Activated T-helper 2 cell treated with anti-CD3 and anti-CD28 coated beads, Interferon-gamma antibody, Interleukin-2, Interleukin-4, amounts not matched to agents 10 μg/mL and 5 μg/mL and 100 μg/mL, durations not matched to agents 14 hours and 24 hours and 36 hours (primary cell): ENCODE measurements at regions of chr21 and their contacts with region 1.

Region 1: GRCh38 chr21:35342440-35342839 is 293.3 kb upstream of the RUNX1 start:
- DNase-seq: no peak
- H3K4me3 Mint-ChIP-seq: peak overlapping the region; percentile 69
- H3K27ac Mint-ChIP-seq: peak overlapping the region; percentile 98
- H3K4me1 Mint-ChIP-seq: peaks cover 63% of the 10 kb centered on the region
- H3K27me3 Mint-ChIP-seq: no peaks in the 10 kb centered on the region

Region 2: GRCh38 chr21:35088319-35088771 is 254.1 kb before region 1 on chr21:
- intact Hi-C with region 1: loop called (anchors 2 kb)
- DNase-seq: no peak
- H3K4me3 Mint-ChIP-seq: no peak overlapping the region
- H3K27ac Mint-ChIP-seq: peak overlapping the region; percentile 85
- H3K4me1 Mint-ChIP-seq: peaks cover 52% of the 10 kb centered on the region
- H3K27me3 Mint-ChIP-seq: no peaks in the 10 kb centered on the region

Region 3: DNA sequence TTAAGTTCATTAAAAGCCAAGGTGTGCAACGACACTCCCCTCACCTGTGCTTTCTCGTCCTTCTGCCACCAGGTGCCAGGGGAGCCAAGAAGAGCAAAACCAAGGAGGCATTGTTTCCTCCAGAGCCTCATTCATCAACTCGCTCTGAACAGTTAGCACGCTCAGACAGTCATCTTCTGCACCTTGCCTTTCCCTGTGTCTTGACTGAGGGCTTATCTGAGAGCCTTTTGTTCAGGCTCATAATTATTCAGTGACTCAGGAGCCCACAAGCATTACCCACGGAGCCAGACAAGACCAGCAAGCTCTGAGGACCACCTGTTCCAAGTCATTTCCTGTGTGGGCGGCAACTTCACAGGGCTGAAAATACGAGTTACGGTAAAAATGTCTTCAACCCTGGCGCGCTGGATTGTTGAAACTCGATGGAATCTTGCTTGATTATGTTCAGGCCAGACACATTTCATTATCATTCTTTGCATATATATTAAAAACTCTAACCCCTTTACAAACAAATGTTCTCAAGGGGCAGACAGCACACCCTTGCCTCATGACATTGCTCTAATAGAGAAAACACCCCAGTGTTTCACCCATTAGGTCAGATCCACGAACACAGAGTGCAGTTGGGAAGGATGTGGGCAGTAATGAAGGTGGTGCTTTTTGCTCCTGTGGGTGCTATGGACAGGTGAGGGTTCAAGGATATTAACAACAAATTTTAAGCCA is 203.6 kb before region 1 on chr21:
- intact Hi-C with region 1: loop called (anchors 1 kb)
- DNase-seq: peak; percentile 10
- H3K4me3 Mint-ChIP-seq: peak overlapping the region; percentile 62
- H3K27ac Mint-ChIP-seq: peak overlapping the region; percentile 94
- H3K4me1 Mint-ChIP-seq: peaks cover 33% of the 10 kb centered on the region
- H3K27me3 Mint-ChIP-seq: no peaks in the 10 kb centered on the region

Region 4: DNA sequence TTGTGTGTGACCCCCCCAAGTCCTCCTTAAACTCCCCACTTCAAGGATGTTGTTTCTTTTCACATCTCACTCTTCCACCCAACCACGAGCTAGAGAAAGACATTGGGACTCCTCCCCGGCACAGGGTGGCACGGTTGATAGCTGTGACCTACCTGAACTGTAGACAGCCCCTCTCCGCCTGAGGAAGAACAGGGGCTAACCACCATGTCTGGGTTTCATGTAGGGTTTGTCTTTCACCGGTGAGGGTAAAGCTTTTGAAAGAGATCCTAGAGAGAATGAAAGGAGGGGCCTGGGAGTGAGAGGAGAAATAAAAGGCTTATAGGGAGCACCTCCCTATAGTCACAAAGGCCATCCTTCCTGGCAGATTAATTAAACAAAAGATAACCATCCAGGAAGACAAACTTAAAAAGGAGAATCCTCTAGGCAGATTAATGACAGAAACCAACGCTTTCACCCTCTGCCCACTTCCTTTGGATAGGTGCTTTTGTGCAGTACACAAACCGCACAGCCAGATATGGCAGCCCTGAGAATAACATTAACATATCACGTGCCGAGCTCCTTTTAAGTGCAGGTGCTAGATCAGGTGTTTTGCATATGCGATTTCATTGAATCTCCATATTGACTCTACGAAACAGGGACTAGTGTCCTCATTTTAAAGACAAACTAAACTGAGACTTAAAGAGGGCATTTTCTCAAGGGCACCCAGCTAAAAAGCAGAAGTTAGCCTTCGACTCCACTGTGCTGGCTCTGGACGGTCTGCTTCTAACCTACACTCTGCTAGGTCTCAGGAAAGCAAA is 115.3 kb before region 1 on chr21:
- intact Hi-C with region 1: loop called (anchors 1 kb)
- DNase-seq: peak; percentile 52
- H3K4me3 Mint-ChIP-seq: peak overlapping the region; percentile 37
- H3K27ac Mint-ChIP-seq: peak overlapping the region; percentile 72
- H3K4me1 Mint-ChIP-seq: peaks cover 52% of the 10 kb centered on the region
- H3K27me3 Mint-ChIP-seq: no peaks in the 10 kb centered on the region

Region 5: DNA sequence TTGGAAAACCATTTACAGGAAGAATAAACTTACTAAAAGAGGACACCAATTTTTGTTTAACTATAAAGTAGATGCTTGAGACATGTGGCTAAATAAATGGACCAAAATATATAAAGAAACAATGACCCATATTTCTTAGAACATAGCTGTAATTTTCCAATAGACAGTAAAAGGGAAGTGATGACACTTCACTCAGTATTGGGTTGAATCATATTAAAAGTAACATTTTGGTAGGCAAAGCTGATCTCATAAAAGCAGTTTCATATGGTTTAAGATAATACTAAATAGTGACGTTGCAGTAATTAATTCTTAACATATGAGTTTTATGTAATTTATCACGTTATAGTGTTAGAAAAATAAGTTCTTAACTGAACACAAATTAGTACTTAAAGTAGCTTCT is 15.6 kb after region 1 on chr21:
- intact Hi-C with region 1: loop called (anchors 1 kb)
- DNase-seq: no peak
- H3K4me3 Mint-ChIP-seq: no peak overlapping the region
- H3K27ac Mint-ChIP-seq: peak overlapping the region; percentile 88
- H3K4me1 Mint-ChIP-seq: peaks cover 11% of the 10 kb centered on the region
- H3K27me3 Mint-ChIP-seq: no peaks in the 10 kb centered on the region

Region 6: DNA sequence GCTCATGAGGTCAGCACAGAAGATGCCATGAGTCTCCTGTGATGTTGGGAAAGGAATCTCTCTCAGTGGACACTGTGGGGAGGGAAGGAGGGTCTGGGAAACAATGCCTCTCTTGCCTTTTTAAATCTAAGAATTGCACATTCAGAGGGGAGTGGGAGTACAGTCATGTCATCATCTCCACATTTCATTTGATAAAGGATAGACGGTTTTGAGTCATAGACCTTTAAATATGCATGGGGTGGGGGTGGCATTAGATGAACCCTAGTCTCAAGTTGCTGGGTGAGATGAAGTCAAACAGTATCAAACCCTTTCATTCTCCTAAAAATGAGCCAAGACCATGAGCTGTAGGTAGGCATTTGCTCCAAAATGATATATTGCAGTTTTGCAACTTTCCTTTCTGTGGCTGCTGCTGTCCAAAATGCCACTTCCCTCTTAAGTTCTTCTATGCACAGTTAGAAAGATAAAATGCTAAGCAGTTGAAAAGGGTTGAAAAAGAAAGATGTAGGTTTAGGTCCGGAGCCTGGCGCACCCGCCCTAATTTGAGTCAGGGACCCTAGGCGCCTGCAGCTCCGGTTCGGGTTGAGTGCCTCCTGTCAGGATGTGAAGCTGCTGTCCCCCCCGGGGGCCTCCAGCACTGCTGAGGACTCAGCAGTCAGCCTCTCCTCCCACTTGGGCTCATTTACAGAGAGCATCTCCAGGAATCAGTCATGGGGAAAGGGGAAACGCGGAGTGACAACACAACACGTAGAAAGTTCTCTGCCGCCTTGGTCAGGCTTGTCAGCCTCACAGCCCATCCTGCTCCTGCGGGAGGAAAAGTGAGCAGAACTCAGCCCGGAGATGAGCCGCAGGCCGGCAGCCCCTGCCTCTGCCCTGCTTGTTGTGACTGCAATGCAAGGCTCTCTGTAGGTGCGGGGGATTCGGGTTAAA is 185.9 kb after region 1 on chr21:
- intact Hi-C with region 1: loop called (anchors 5 kb)
- DNase-seq: peak; percentile 26
- H3K4me3 Mint-ChIP-seq: peak overlapping the region; percentile 85
- H3K27ac Mint-ChIP-seq: peak overlapping the region; percentile 95
- H3K4me1 Mint-ChIP-seq: peaks cover 53% of the 10 kb centered on the region
- H3K27me3 Mint-ChIP-seq: no peaks in the 10 kb centered on the region